ENCODE measurements at regions of chr6 and their contacts with region 1.

Region 1: DNA sequence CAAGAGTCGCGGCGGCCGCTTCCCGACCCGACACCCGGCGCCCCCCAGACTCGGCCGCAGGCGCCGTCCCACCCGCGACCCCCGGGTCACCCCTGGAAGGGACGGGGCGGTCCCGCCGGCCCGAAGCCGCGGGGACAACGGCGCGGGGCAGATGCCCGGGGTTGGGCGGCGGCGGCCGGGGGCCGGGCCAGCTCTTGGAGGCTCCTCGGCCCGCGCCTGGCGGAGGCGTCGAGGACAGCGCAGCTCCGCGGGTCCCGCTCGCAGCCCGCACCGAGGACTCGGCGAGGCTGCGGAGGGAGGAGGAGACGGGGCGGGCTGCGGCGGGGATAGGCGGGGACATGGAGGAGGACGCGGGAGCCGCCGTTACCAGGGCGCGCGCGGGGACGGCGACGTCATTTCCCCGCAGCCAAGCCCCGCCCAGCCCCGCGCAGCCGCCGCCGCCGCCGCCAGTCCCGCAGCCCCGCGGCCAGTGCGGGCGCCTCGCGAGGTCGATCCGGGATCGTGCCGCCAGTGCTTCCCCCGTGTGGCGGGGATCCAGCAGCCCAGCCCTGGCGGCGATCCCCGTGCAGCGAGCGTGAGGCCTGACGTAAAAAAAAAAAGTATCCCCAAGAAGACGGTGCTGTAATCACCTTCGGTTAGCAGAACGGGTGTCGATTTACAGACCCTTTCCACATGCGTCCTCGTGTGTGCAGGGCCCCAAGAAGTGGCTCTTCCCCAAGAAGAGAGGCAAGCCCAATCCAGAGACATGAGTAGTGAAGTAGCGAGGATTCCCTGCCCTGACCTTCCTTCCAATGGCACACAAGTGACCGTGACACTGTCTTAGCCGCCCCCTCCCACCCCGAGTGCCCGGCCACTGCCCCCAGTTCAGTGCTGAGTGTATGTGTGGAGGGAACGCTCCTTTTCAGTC is at the start of gene FAM184A:
- DNase-seq: peak; percentile 74
- H3K4me3 Mint-ChIP-seq: peak within 1 kb of the TSS; percentile 86
- H3K27ac Mint-ChIP-seq: peak within 1 kb of the TSS; percentile 96
- H3K4me1 Mint-ChIP-seq: peaks cover 42% of the 10 kb centered on the region
- H3K27me3 Mint-ChIP-seq: no peaks in the 10 kb centered on the region
- total RNA-seq, gene FAM184A: 13.5 to 14.0 TPM

Region 2: DNA sequence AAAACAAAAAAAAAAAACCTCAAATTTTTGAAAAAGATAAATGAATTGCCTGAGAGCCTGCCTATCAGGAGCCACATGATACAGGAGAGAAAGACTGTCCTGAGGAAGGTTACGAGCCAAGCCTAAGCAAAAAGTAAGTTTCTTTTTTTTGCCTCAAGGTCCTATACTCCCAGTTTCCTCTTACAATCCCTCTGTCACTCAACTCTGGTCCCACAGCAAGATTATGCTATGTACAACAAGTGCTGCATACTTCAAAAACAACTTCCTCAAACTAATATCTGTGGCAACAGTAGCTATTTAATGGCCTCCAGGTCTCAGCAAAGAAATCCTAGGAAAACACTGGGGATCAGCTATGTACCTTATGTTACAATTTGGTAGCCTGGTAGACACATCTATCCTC is 483.8 kb before region 1 on chr6:
- CTCF ChIA-PET with region 1: no interaction called
- intact Hi-C with region 1: no loop called
- DNase-seq: no peak
- H3K4me3 Mint-ChIP-seq: no peak overlapping the region
- H3K27ac Mint-ChIP-seq: no peak overlapping the region
- H3K4me1 Mint-ChIP-seq: peaks cover 42% of the 10 kb centered on the region
- H3K27me3 Mint-ChIP-seq: no peaks in the 10 kb centered on the region

Region 3: GRCh38 chr6:118651282-118652050 is 427.2 kb before region 1 on chr6 and contains the start of gene CEP85L:
- CTCF ChIA-PET with region 1: no interaction called
- intact Hi-C with region 1: loop called (anchors 2 kb)
- DNase-seq: peak; percentile 90
- H3K4me3 Mint-ChIP-seq: peak within 1 kb of the TSS; percentile 86
- H3K27ac Mint-ChIP-seq: peak within 1 kb of the TSS; percentile 89
- H3K4me1 Mint-ChIP-seq: peaks cover 49% of the 10 kb centered on the region
- H3K27me3 Mint-ChIP-seq: no peaks in the 10 kb centered on the region
- total RNA-seq, gene CEP85L: 31.4 to 31.9 TPM

Region 4: GRCh38 chr6:118810420-118811027 is 268.1 kb before region 1 on chr6:
- CTCF ChIA-PET with region 1: no interaction called
- intact Hi-C with region 1: loop called (anchors 1 kb)
- DNase-seq: peak; percentile 79
- H3K4me3 Mint-ChIP-seq: no peak overlapping the region
- H3K27ac Mint-ChIP-seq: peak overlapping the region; percentile 75
- H3K4me1 Mint-ChIP-seq: peaks cover 47% of the 10 kb centered on the region
- H3K27me3 Mint-ChIP-seq: no peaks in the 10 kb centered on the region

Region 5: DNA sequence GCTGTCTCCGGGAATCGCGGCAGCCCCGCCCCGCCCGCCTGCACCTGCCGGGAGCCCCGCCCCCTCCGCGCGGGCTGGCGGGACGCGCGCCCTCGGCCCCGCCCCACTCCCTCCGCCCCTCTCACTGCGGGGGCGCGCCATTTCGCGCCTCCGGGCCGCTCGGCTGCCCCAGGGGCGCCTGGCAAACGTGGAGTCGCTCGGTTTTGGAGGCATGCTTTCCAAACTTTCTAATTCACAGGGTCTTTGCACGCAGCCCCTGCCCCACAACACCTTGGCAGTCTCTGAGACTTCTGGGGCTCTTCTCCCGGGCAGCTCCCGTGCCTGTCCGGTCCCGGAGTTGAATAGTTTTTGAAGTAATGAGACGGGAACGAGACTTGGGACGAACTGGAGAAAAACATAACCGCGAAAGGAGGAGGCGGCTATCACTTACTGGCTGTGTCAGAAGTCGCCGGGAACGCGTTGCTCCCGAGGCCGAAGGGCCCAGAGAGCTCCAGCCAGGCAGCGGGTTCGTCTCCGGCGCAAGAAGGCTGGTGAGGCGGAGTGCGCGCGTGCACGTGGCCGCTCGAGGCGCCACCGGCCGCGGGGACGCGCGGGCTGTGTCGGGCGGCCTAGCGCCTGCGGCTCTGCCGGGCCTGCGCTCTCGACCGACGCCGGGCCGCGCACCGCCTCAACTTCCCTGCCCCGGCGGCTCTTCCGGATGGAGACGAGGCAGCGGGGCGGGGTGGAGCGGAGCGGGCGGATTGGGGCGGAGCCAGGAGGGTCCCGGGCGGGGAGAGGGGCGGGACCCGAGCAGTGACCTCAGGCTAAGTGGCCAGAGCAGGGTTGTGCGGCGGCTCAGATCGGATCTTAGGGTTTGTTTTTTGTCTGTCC is 143.9 kb before region 1 on chr6 and contains the start of gene MCM9:
- CTCF ChIA-PET with region 1: no interaction called
- intact Hi-C with region 1: loop called (anchors 1 kb)
- DNase-seq: peak; percentile 89
- H3K4me3 Mint-ChIP-seq: peak within 1 kb of the TSS; percentile 87
- H3K27ac Mint-ChIP-seq: peak within 1 kb of the TSS; percentile 90
- H3K4me1 Mint-ChIP-seq: peaks cover 29% of the 10 kb centered on the region
- H3K27me3 Mint-ChIP-seq: no peaks in the 10 kb centered on the region
- total RNA-seq, gene MCM9: 16.3 to 16.4 TPM

Region 6: DNA sequence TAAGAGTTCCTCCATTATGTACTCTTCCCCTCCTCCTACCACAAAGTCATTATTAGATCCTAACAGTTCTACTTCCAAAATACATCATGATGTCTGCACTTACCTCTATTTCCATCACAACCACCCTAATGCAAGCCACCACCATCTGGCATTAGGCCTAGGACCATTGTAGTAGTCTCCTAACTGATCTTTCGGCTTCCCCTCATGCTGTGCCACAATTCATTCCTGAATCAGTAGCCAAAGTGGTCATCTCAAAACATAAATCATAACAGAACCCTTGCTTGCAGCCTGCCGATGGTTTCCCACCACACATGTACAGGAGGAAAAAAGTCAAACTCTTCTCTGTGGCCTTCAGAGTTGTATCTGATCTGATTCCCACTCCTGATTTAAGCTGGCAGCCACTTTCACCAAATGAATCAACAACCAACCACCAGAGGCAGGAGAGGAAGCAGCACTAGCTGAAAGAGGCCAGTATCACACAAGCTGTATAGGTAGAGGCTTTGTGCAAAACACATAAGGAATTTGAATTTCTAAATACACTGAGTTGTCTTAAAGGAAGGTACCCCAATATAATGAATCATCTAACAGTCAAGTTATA is 26.2 kb before region 1 on chr6:
- CTCF ChIA-PET with region 1: interaction called, 5 read pairs
- intact Hi-C with region 1: loop called (anchors 1 kb)
- DNase-seq: peak; percentile 69
- H3K4me3 Mint-ChIP-seq: no peak overlapping the region
- H3K27ac Mint-ChIP-seq: peak overlapping the region; percentile 30
- H3K4me1 Mint-ChIP-seq: peaks cover 30% of the 10 kb centered on the region
- H3K27me3 Mint-ChIP-seq: no peaks in the 10 kb centered on the region

Region 7: GRCh38 chr6:119147101-119148053 is 68.7 kb after region 1 on chr6:
- CTCF ChIA-PET with region 1: no interaction called
- intact Hi-C with region 1: loop called (anchors 1 kb)
- DNase-seq: peak; percentile 77
- H3K4me3 Mint-ChIP-seq: no peak overlapping the region
- H3K27ac Mint-ChIP-seq: peak overlapping the region; percentile 48
- H3K4me1 Mint-ChIP-seq: peaks cover 43% of the 10 kb centered on the region
- H3K27me3 Mint-ChIP-seq: peaks cover 6% of the 10 kb centered on the region

Region 8: DNA sequence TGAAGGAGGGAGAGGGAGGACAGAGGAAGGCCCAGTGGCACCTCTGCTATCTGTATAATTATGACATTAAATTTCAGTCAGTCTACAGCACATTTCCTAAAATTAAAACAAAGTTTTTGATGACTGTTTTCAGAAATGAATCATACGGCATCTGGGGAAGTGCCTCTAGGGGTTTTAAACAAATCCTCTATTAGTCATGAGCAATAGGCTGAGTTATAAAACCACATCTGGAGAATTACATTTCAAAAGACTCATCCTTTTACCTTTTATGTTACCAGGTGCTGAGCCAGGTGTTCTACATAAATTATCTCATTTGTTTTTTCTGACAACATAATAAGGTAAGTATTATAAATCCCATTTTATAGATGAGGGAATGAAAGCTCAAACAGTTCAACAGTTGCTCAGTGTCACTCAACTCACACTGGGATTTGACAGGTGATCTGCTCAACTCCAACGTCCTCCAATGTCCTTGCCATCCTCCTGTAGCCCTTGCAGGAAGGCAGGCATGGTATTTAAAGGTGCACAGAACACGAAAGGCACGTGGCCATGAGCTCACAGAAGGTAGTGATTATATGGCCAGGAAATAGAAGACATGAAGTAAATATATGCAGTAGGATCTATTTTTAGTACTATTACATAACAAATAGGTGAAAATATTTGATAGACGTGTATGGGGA is 455.1 kb after region 1 on chr6:
- CTCF ChIA-PET with region 1: no interaction called
- intact Hi-C with region 1: loop called (anchors 1 kb)
- DNase-seq: peak; percentile 16
- H3K4me3 Mint-ChIP-seq: no peak overlapping the region
- H3K27ac Mint-ChIP-seq: no peak overlapping the region
- H3K4me1 Mint-ChIP-seq: peaks cover 9% of the 10 kb centered on the region
- H3K27me3 Mint-ChIP-seq: peaks cover 6% of the 10 kb centered on the region